ENCODE measurements at regions of chr2 and their contacts with region 1.

Region 1: DNA sequence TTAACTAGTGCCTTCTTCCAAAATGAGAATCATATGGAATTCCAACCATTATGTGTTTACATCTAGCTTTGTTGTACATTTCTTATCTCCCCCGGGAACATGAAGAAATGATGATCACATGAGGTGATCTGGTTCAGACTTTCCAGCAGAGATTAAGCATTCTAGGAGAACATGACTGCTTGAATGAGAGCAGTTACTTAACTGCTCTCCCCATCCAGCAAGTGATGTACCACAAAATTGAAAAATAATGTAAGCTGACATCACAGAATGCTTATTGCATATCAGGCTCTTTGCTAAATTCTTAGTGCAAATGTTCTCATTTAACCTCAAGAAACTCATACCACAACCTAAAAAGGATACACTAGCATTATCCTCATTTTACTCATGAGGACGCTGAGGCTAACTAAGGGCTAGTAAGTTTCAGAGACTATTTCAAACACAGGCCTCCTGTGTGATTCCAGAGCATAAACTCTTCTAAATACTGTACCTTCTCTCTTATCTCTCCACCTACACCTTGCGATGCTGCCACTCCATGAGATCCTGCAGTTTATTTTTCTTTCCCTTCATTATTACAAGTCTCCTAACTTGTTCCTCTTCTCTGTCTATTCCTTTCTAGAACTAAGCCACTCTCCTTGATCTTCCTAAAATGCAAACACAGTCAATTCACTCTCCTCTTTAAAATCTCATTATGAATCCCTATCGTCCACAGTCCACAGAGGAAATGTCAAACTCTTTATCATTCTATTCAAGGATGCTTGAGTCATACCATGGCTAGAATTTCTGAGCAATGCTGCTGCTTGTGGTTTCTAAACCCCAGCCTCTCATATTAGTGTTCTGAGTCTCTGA is 1224.8 kb upstream of the ZEB2 start:
- DNase-seq: no peak
- ATAC-seq: no peak
- H3K4me3 ChIP-seq: no peak overlapping the region
- H3K4me3 Mint-ChIP-seq: peak overlapping the region; percentile 29
- H3K27ac ChIP-seq: no peak overlapping the region
- H3K27ac Mint-ChIP-seq: peak overlapping the region; percentile 48
- H3K4me1 ChIP-seq: peaks cover 30 to 34% of the 10 kb centered on the region in 2 donors
- H3K4me1 Mint-ChIP-seq: peaks cover 68% of the 10 kb centered on the region
- H3K27me3 ChIP-seq: no peaks in the 10 kb centered on the region
- H3K27me3 Mint-ChIP-seq: no peaks in the 10 kb centered on the region
- CTCF ChIP-seq: no peak

Region 2: DNA sequence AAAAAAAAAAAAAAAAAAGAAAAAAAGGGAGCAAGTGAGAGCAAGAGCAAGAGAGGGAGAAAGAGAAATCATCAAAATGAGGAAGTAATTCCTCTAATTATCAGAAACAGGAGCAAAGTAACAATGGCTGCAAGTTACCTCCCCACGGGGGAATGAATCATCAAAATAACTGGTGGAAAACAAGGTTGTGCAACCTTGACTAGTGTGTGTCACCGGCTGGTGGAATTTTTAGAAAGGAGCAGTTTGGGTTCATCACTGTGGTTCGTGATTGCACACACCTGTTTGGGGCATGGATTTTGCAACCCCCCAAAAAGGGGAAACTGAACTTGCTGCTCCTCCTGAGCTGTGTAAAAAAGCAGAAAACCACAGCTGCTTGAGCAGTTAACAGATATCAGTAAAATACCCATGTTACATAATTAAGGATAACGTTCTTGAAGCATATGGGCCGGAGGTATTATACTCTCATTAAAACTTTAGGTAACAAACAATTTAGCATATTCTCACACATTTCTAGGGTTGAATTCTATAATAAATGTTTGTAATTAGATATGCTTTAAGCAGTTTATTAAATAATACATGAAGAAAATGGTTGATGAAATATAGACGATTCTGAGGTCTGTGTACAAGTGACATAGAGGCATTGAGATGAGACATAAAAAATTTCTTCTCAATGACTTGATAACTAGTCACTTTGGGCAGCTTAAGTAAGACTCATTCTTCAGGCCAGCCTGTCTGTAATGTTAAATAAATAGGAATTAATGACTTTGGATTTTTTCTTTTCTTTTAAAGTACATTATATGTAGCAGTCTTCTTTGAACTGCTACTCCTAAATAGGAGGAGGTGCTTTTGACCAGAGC is 1040.7 kb before region 1 on chr2:
- CTCF ChIA-PET with region 1: no interaction called
- POLR2A ChIA-PET with region 1: no interaction called
- intact Hi-C with region 1: loop called (anchors 10 kb)
- DNase-seq: peak; percentile 72
- ATAC-seq: peak; percentile 87
- H3K4me3 ChIP-seq: peak overlapping the region in 3 of 5 experiments; percentile 12 to 23 (median 17)
- H3K4me3 Mint-ChIP-seq: peak overlapping the region; percentile 50
- H3K27ac ChIP-seq: peak overlapping the region; percentile 9 to 36
- H3K27ac Mint-ChIP-seq: peak overlapping the region; percentile 70
- H3K4me1 ChIP-seq: peaks cover 41 to 42% of the 10 kb centered on the region in 2 donors
- H3K4me1 Mint-ChIP-seq: peaks cover 46% of the 10 kb centered on the region
- H3K27me3 ChIP-seq: no peaks in the 10 kb centered on the region
- H3K27me3 Mint-ChIP-seq: no peaks in the 10 kb centered on the region
- CTCF ChIP-seq: no peak

Region 3: GRCh38 chr2:145669301-145669700 is 75.5 kb before region 1 on chr2:
- CTCF ChIA-PET with region 1: no interaction called
- POLR2A ChIA-PET with region 1: no interaction called
- intact Hi-C with region 1: no loop called
- DNase-seq: no peak
- ATAC-seq: no peak
- H3K4me3 ChIP-seq: no peak overlapping the region
- H3K4me3 Mint-ChIP-seq: no peak overlapping the region
- H3K27ac ChIP-seq: no peak overlapping the region
- H3K27ac Mint-ChIP-seq: no peak overlapping the region
- H3K4me1 ChIP-seq: no peaks in the 10 kb centered on the region
- H3K4me1 Mint-ChIP-seq: peaks cover 17% of the 10 kb centered on the region
- H3K27me3 ChIP-seq: no peaks in the 10 kb centered on the region
- H3K27me3 Mint-ChIP-seq: no peaks in the 10 kb centered on the region
- CTCF ChIP-seq: no peak

Region 4: GRCh38 chr2:145692971-145693478 is 51.7 kb before region 1 on chr2:
- CTCF ChIA-PET with region 1: no interaction called
- POLR2A ChIA-PET with region 1: no interaction called
- intact Hi-C with region 1: loop called (anchors 2 kb)
- DNase-seq: peak; percentile 45
- ATAC-seq: peak; percentile 86
- H3K4me3 ChIP-seq: no peak overlapping the region
- H3K4me3 Mint-ChIP-seq: peak overlapping the region; percentile 74
- H3K27ac ChIP-seq: no peak overlapping the region
- H3K27ac Mint-ChIP-seq: peak overlapping the region; percentile 85
- H3K4me1 ChIP-seq: peaks cover 8 to 9% of the 10 kb centered on the region in 2 donors
- H3K4me1 Mint-ChIP-seq: peaks cover 39% of the 10 kb centered on the region
- H3K27me3 ChIP-seq: no peaks in the 10 kb centered on the region
- H3K27me3 Mint-ChIP-seq: no peaks in the 10 kb centered on the region
- CTCF ChIP-seq: no peak

Measured in B cell (primary cell).